ENCODE measurements at regions of chr18 and their contacts with region 1.

Region 1: GRCh38 chr18:22169007-22169864 is at the start of gene GATA6:
- DNase-seq: peak; percentile 92 to 94 (median 93)
- ATAC-seq: peak; percentile 80
- H3K4me3 ChIP-seq: peak within 1 kb of the TSS; percentile 90
- H3K4me1 ChIP-seq: peaks cover 13% of the 10 kb centered on the region
- CTCF ChIP-seq: no peak
- total RNA-seq, gene GATA6: 21.9 to 58.8 (median 43.3) TPM

Region 2: DNA sequence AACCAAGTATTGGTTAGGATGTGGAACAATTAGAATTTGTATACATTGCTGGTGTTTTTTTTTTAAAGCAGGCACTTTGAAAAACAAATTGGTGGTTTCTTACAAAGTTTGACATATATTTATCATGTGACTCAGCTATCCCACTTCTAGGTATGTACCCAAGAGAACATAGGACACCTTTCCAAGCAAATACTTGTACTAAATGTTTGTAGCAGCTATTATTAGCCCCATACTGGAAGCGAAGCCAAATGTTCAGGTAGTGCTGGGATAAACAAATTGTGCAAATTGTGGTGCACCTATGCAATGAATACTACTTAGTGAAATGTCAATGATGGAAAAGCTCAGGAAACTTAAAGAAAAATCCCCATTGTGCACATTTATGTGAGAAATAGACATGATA is 327.7 kb before region 1 on chr18:
- intact Hi-C with region 1: no loop called
- DNase-seq: no peak
- ATAC-seq: no peak
- H3K4me3 ChIP-seq: no peak overlapping the region
- H3K4me1 ChIP-seq: no peaks in the 10 kb centered on the region
- CTCF ChIP-seq: no peak

Region 3: DNA sequence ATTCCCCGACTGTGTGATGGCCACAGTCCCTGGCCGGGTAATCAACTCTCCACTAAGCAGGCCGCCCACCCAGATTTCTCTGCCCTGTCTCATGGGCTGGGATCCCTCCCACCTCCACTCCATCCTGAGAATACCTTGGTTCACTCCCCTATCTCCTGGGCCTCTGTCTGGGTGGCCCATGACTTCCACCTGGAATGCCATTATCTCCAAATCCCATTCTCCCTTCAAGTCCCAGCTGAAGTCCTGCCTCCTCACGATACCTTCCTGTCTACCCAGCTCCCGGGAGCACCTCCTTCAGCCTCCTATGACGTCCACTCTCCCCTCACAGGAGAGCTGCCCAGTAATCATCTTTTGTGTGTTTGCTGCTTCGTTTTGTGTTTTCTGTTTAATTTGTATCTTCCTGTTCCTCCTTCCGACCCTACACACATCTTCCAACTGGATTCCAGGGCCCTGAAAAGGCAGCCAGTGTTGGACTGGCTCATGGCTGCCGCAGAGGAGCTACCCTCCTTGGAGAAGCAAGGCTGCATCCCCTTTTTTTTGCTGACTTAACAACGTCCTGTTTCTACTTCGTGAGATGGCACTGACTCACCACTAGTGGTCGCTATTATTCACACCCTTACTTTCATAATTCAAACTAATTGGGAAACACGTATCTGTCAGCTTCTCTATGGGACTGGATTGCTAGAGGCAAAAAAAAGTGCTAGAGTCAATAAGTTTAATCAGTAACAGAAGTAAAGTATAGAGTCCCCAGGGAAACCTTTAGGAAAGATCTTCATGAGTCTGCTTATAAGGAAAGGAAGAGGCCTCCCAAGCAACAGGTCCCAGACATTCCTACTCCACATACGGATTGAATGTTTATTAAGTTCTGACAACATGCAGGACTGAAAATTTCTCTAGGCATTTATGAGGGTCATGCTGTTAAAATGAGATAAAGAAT is 171.8 kb before region 1 on chr18:
- intact Hi-C with region 1: loop called in 1 of 2 experiments (anchors 5 kb)
- DNase-seq: peak in 2 of 3 donors; percentile 34 to 42
- ATAC-seq: peak; percentile 89
- H3K4me3 ChIP-seq: no peak overlapping the region
- H3K4me1 ChIP-seq: peaks cover 20% of the 10 kb centered on the region
- CTCF ChIP-seq: peak; percentile 57

Region 4: DNA sequence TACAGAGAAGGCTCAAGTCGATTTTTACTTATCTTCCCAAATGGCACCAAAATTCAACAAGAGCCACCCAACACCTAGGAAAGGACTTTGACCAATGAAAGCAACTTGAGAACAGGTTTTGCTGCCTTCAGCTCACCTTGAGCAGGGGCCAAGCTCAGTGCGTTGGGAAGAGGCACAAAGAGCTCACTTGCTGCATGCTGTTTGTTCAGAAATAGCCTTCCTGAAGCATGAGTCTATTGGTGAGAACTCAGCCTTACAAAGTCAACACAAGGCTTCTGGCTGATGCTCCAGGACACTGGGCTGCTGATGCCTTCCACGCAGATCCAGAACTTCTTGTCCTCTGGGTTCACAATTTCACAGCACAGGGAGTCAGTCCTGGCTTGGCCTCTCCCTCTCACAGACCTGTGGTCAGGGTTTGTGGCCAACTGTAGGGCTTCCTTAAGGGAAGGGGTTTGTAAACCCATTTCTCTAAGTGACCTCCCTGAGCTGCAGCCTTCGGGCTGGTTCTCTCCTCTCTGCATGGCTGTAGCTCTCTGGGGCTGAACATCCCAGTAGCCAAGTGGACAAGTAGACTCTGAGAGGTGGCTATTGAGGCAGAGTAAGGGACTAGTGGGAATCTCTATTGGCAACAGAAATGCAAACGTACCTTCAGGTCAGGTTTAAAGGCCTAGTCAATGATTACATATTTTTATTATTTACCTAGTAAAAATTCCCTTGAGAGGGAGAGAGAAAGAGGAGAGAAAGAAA is 124.6 kb before region 1 on chr18:
- intact Hi-C with region 1: loop called in 1 of 2 experiments (anchors 5 kb)
- DNase-seq: peak; percentile 72 to 80 (median 73)
- ATAC-seq: peak; percentile 77
- H3K4me3 ChIP-seq: no peak overlapping the region
- H3K4me1 ChIP-seq: peaks cover 16% of the 10 kb centered on the region
- CTCF ChIP-seq: no peak

Region 5: GRCh38 chr18:22223254-22223960 is 54.2 kb after region 1 on chr18:
- intact Hi-C with region 1: no loop called
- DNase-seq: peak; percentile 78 to 90 (median 85)
- ATAC-seq: peak; percentile 97
- H3K4me3 ChIP-seq: no peak overlapping the region
- H3K4me1 ChIP-seq: peaks cover 14% of the 10 kb centered on the region
- CTCF ChIP-seq: no peak